Dorsolateral prefrontal cortex (tissue), 120 donors: ENCODE measurements at regions of chr10 and their contacts with region 1.

Region 1: DNA sequence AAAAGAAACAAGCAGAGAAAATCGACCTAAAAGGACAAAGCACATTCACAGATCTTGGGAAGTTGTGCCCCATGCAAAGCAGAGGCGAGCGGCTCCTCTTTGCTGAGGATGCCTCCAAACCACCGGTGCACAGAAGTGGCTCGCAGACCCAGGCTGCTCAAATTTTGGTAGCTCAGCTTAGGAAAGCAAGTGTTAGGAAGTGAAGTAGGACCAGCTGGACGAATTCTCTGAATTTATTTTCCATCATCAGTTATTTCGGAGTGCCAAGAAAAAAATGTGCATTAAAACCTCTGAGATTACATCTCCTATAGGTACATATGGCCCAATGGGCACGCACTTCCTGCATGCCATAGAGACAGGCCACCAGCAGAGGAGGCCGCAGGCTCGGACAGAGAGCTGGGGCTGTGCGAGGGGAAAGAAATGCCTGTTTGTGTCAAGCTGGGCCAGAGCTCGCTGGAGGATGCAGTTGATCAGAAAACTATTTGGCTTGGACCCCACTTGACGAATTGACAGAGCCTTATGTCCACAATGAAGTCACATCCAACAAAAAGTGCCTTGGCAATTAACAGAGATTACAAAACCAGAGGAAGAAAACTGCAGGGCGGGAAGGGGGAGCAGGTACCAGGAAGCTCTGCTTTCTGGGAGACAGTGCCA is 122.3 kb upstream of the LYZL2 start:
- DNase-seq: peak; percentile 14 to 92 (median 81)
- H3K4me3 ChIP-seq: peak overlapping the region in 9 of 59 donors; percentile 4 to 38 (median 11)
- H3K27ac ChIP-seq: peak overlapping the region; percentile 10 to 95 (median 82)
- H3K27me3 ChIP-seq: no peaks in the 10 kb centered on the region
- CTCF ChIP-seq: peak; percentile 51 to 99 (median 89)

Region 2: GRCh38 chr10:30719832-30720618 is 31.8 kb before region 1 on chr10:
- intact Hi-C with region 1: no loop called
- DNase-seq: no peak
- H3K4me3 ChIP-seq: no peak overlapping the region
- H3K27ac ChIP-seq: no peak overlapping the region
- H3K27me3 ChIP-seq: peaks cover 0 to 5% (median 0%) of the 10 kb centered on the region in 45 donors
- CTCF ChIP-seq: no peak

Region 3: DNA sequence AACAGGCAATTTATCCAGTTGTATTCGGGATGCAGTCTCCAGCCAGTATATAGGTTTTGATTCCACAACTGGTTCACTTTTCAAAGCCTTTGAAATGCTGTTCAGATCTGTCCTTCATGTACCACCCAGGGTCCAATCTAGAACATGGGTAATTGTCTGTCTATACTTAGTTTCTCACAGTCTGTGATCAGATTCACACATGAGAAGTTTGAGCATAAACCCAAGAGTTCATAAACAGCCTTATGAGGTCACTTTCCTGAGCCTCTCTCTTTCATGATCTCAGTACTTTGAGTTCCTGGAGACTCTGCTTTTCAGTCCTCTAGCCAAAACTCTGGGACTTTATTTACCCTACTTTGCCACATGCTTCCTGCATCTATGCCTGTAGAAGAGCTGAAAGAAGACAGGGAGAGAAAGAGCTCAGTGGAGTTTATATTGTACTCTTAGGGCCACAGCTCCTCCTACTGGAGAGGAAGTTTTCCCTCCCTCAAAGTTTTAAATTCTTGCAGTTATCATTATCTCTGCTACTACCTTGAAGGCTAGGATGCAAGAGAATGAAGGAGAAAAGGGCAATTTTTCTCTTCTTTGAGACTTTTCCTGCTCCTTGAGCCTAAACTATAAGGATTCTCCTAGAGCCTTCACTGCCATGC is 739.2 kb after region 1 on chr10:
- intact Hi-C with region 1: loop called in 1 of 2 experiments (anchors 5 kb)
- DNase-seq: no peak
- H3K4me3 ChIP-seq: no peak overlapping the region
- H3K27ac ChIP-seq: no peak overlapping the region
- H3K27me3 ChIP-seq: no peaks in the 10 kb centered on the region
- CTCF ChIP-seq: peak in 53 of 56 donors; percentile 18 to 70 (median 52)